ENCODE measurements at regions of chr17 and their contacts with region 1.

Region 1: GRCh38 chr17:77331301-77331864 is 190.6 kb downstream of the SEC14L1 start:
- DNase-seq: peak; percentile 97
- ATAC-seq: peak; percentile 92
- H3K4me3 Mint-ChIP-seq: peak overlapping the region; percentile 67
- H3K27ac Mint-ChIP-seq: peak overlapping the region; percentile 89
- H3K4me1 Mint-ChIP-seq: peaks cover 33% of the 10 kb centered on the region
- H3K27me3 Mint-ChIP-seq: no peaks in the 10 kb centered on the region

Region 2: DNA sequence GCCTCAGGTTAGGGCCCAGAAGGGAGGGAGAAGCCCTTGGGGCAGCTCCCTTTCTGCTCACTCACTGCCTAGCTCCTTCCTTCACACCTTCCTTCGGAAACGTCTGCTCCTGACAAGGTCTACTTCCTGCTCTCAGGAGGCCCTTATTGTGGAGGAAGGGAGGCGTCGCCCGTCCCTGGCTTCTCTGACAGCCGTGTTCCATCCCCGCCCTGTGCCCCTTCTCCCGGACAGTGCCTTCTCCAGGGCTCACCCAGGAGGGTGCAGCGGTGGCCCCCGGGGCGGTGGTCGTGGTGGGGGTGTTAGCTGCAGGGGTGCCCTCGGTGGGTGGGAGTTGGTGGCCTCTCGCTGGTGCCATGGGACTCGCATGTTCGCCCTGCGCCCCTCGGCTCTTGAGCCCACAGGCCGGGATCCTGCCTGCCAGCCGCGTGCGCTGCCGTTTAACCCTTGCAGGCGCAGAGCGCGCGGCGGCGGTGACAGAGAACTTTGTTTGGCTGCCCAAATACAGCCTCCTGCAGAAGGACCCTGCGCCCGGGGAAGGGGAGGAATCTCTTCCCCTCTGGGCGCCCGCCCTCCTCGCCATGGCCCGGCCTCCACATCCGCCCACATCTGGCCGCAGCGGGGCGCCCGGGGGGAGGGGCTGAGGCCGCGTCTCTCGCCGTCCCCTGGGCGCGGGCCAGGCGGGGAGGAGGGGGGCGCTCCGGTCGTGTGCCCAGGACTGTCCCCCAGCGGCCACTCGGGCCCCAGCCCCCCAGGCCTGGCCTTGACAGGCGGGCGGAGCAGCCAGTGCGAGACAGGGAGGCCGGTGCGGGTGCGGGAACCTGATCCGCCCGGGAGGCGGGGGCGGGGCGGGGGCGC is 41.3 kb after region 1 on chr17:
- CTCF ChIA-PET with region 1: interaction called, 48 read pairs
- DNase-seq: peak; percentile 82
- ATAC-seq: peak; percentile 57
- H3K4me3 Mint-ChIP-seq: peak overlapping the region; percentile 66
- H3K27ac Mint-ChIP-seq: peak overlapping the region; percentile 73
- H3K4me1 Mint-ChIP-seq: peaks cover 44% of the 10 kb centered on the region
- H3K27me3 Mint-ChIP-seq: no peaks in the 10 kb centered on the region

Region 3: DNA sequence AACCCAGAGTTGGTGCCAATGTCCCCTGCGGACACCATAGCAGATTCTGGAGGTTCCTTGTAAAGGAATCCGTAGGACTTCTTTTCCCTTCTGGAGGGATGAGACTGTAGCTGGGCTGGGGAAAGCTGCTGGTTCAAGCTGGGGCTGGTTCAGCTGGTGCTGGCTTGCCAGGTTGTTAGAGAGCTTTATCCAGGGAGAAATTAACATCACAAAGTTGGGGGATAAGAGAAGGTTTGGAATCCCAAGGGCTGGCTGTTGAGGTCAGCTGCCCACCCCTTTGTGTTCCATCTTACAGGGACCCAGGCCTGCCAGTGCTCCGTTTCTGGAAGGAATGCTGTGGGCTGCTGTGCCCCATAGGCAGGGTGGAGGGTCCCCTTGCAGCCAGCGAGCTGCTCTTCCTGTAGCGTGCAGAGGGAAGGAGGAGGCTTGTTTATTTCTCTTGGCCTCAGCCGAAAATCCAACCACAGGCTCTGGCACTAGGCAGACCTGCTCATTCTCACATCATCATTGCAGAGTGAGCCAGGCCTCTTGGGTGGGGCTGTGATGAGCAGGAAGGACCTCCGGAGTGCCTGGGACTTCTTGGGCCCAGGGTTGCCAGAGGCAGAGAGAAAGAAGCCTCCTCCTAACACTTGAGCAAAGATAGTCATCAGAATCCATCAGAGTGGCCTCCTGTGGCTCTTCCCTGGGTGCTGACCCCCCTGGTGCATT is 60.4 kb after region 1 on chr17:
- CTCF ChIA-PET with region 1: interaction called, 40 read pairs
- DNase-seq: peak; percentile 81
- ATAC-seq: peak; percentile 37
- H3K4me3 Mint-ChIP-seq: peak overlapping the region; percentile 42
- H3K27ac Mint-ChIP-seq: peak overlapping the region; percentile 82
- H3K4me1 Mint-ChIP-seq: peaks cover 72% of the 10 kb centered on the region
- H3K27me3 Mint-ChIP-seq: no peaks in the 10 kb centered on the region

Region 4: GRCh38 chr17:77429919-77430752 is 98.8 kb after region 1 on chr17:
- CTCF ChIA-PET with region 1: interaction called, 54 read pairs
- DNase-seq: peak; percentile 89
- ATAC-seq: peak; percentile 50
- H3K4me3 Mint-ChIP-seq: no peak overlapping the region
- H3K27ac Mint-ChIP-seq: no peak overlapping the region
- H3K4me1 Mint-ChIP-seq: peaks cover 68% of the 10 kb centered on the region
- H3K27me3 Mint-ChIP-seq: no peaks in the 10 kb centered on the region

Region 5: DNA sequence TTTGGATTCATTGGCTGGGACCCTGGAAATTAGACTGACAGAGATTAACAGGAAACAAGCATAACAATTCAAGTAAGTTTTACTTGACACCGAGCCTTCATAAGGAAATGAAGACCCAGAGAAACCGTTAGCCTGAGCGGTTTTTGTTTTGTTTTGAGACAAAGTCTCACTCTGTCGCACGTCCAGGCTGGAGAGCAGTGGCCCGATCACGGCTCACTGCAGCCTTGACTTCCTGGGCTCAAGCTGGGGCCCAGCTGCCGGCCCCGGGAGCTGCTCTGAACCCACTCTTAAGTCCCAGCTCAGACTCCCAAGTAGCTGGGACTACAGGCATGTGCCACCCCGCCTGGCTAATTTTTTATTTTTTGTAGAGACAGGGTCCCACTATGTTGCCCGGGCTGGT is 130.7 kb after region 1 on chr17:
- CTCF ChIA-PET with region 1: interaction called, 11 read pairs
- DNase-seq: peak; percentile 82
- ATAC-seq: peak; percentile 42
- H3K4me3 Mint-ChIP-seq: peak overlapping the region; percentile 86
- H3K27ac Mint-ChIP-seq: peak overlapping the region; percentile 99
- H3K4me1 Mint-ChIP-seq: peaks cover 90% of the 10 kb centered on the region
- H3K27me3 Mint-ChIP-seq: no peaks in the 10 kb centered on the region

Region 6: DNA sequence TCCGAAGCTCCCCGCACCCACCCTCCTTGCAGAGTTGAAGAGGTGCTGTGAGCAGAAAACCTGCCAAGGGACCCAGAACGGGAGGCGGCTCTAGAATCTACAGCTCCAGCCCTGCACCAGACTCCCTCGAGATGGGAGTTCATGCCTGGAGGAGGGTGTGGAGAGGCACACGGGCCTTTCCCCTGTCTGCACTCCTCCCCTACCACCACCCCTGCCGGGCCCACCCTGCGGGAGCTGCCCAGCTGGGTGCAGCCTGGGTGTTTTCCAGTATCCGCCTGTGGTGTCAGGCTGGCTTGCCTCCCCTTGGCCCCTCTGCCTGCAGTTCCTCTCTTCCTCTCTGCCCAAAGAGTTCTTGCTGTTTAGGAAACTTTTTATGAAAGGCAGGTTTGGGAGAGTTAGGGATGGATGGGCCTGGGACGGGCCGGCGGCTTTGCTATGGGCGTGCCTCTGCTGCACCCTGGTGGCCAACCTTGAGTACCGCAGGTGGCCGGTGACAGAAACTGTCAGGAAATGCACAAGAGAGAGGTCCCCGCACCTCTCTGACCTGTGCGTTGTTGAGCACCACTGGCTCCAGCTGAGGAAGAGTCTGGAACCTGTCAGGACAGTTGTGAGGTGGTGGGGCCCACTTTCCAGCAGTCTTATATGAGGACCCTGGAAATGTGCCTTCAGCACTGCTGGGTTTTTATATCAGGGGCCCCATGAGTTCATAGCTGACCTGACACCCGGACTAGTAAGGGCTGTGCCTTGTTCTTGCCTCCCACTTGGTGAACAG is 163.5 kb after region 1 on chr17:
- CTCF ChIA-PET with region 1: interaction called, 58 read pairs
- DNase-seq: peak; percentile 77
- ATAC-seq: peak; percentile 74
- H3K4me3 Mint-ChIP-seq: no peak overlapping the region
- H3K27ac Mint-ChIP-seq: peak overlapping the region; percentile 58
- H3K4me1 Mint-ChIP-seq: peaks cover 21% of the 10 kb centered on the region
- H3K27me3 Mint-ChIP-seq: no peaks in the 10 kb centered on the region

Measured in activated CD8-positive, alpha-beta memory T cell treated with anti-CD3 and anti-CD28 coated beads, Interleukin-2, amount 10 ng/mL, durations not matched to agents 7 days and 5 days (primary cell).